CD8-positive, alpha-beta memory T cell (primary cell): ENCODE measurements at regions of chr5 and their contacts with region 1.

Region 1: GRCh38 chr5:58902765-58903164 is 319.9 kb downstream of the RAB3C start:
- DNase-seq: no peak
- H3K4me3 ChIP-seq: no peak overlapping the region
- H3K4me3 Mint-ChIP-seq: no peak overlapping the region
- H3K27ac ChIP-seq: no peak overlapping the region
- H3K27ac Mint-ChIP-seq: no peak overlapping the region
- H3K4me1 ChIP-seq: no peaks in the 10 kb centered on the region
- H3K4me1 Mint-ChIP-seq: no peaks in the 10 kb centered on the region
- H3K27me3 ChIP-seq: no peaks in the 10 kb centered on the region
- H3K27me3 Mint-ChIP-seq: peaks cover 0 to 13% of the 10 kb centered on the region in 2 donors

Region 2: GRCh38 chr5:58886315-58887207 is 16.2 kb before region 1 on chr5:
- CTCF ChIA-PET with region 1: interaction called, 24 read pairs
- POLR2A ChIA-PET with region 1: no interaction called
- DNase-seq: peak; percentile 31 to 67 (median 50)
- H3K4me3 ChIP-seq: no peak overlapping the region
- H3K4me3 Mint-ChIP-seq: peak overlapping the region in 1 of 7 donors; percentile 27
- H3K27ac ChIP-seq: no peak overlapping the region
- H3K27ac Mint-ChIP-seq: peak overlapping the region in 2 of 8 donors; percentile 15 to 56
- H3K4me1 ChIP-seq: peaks cover 10% of the 10 kb centered on the region
- H3K4me1 Mint-ChIP-seq: peaks cover 11 to 19% (median 18%) of the 10 kb centered on the region in 3 donors
- H3K27me3 ChIP-seq: no peaks in the 10 kb centered on the region
- H3K27me3 Mint-ChIP-seq: peaks cover 4 to 22% of the 10 kb centered on the region in 2 donors

Region 3: GRCh38 chr5:58918021-58918729 is 15.4 kb after region 1 on chr5:
- CTCF ChIA-PET with region 1: no interaction called
- POLR2A ChIA-PET with region 1: no interaction called
- DNase-seq: no peak
- H3K4me3 ChIP-seq: no peak overlapping the region
- H3K4me3 Mint-ChIP-seq: no peak overlapping the region
- H3K27ac ChIP-seq: no peak overlapping the region
- H3K27ac Mint-ChIP-seq: no peak overlapping the region
- H3K4me1 ChIP-seq: no peaks in the 10 kb centered on the region
- H3K4me1 Mint-ChIP-seq: no peaks in the 10 kb centered on the region
- H3K27me3 ChIP-seq: no peaks in the 10 kb centered on the region
- H3K27me3 Mint-ChIP-seq: peaks cover 11 to 31% of the 10 kb centered on the region in 2 donors

Region 4: GRCh38 chr5:58944221-58944620 is 41.5 kb after region 1 on chr5:
- CTCF ChIA-PET with region 1: no interaction called
- POLR2A ChIA-PET with region 1: no interaction called
- DNase-seq: no peak
- H3K4me3 ChIP-seq: no peak overlapping the region
- H3K4me3 Mint-ChIP-seq: no peak overlapping the region
- H3K27ac ChIP-seq: no peak overlapping the region
- H3K27ac Mint-ChIP-seq: no peak overlapping the region
- H3K4me1 ChIP-seq: no peaks in the 10 kb centered on the region
- H3K4me1 Mint-ChIP-seq: no peaks in the 10 kb centered on the region
- H3K27me3 ChIP-seq: no peaks in the 10 kb centered on the region
- H3K27me3 Mint-ChIP-seq: peaks cover 6 to 24% of the 10 kb centered on the region in 2 donors

Region 5: DNA sequence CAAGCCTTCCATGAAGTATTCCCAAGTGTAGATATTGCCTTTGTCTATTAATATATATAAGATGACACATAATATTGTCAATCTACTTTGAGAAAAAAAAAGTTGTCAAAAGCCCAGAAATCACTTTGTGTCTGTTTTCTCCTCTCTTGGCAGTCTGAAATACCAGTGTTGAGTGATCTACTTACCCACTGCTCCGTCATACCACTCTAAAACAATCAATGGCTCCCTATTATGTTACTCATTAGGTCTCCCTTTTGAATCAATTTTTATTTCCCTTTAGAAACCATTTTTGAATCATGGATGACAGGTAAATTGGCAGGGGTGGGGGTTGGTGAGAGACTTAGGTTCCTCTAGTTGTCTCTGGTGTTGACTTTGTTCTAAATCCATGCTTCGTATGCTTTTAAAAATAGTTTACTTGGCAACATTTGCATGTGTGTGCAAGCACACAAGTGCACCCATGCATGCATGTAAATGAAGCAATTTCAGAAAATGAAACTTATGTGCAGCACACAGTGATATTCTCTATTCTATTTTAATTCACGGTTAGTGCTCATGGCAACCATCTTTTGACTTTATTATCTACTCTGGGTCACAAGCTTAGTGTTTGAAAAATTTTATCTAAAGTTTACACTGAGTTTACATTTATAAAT is 59.0 kb after region 1 on chr5:
- CTCF ChIA-PET with region 1: no interaction called
- POLR2A ChIA-PET with region 1: no interaction called
- DNase-seq: no peak
- H3K4me3 ChIP-seq: no peak overlapping the region
- H3K4me3 Mint-ChIP-seq: no peak overlapping the region
- H3K27ac ChIP-seq: no peak overlapping the region
- H3K27ac Mint-ChIP-seq: no peak overlapping the region
- H3K4me1 ChIP-seq: no peaks in the 10 kb centered on the region
- H3K4me1 Mint-ChIP-seq: peaks cover 0 to 4% (median 0%) of the 10 kb centered on the region in 3 donors
- H3K27me3 ChIP-seq: no peaks in the 10 kb centered on the region
- H3K27me3 Mint-ChIP-seq: no peaks in the 10 kb centered on the region